Activated CD4-positive, alpha-beta T cell treated with anti-CD3 and anti-CD28 coated beads for 36 hours (primary cell): ENCODE measurements at regions of chr10 and their contacts with region 1.

Region 1: DNA sequence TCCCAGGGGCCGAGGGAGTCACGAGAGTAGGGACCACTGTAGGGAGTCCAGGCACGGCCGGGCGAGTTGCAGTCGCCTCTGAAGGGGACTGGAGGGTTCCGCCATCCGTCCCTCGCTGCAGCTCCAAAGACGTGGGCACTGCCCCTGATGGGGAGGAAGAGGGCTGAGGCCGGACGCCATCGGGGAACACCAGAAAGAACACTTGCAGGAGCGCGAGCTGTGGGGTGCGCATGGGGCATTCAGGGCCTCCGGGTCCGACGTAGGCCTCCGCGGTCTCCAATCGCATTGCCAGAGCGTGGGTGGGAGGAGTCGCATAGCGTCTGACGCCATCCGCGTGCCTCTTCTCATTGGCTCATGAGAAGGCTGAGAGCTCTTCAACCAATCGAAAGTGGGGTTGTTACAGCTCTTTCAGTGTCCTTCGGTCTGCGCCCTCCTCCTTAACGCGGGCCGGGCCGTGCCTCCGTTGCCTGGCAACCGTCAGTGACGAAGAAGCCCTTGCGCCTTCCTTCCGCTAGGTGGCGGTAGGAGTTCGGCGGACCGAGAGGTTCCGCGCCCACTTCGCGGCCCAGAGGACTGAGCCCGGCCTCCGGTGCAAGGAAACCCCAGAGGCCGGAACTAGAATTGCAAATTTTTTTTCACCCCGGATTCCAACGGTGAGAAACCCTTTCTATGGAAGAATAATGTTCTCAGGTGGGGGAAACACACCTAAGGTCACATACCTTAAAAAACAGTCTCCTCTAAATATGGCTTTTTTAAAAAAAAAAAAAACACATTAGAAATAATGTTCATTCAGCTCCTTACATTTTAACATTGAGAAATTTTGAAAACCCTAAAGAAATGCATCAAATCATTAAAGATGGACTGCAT is at the start of gene TCTN3:
- DNase-seq: peak; percentile 96
- ATAC-seq: peak; percentile 99
- H3K4me3 Mint-ChIP-seq: peak within 1 kb of the TSS; percentile 98
- H3K27ac Mint-ChIP-seq: peak within 1 kb of the TSS; percentile 92
- H3K4me1 Mint-ChIP-seq: peaks cover 37% of the 10 kb centered on the region
- H3K27me3 Mint-ChIP-seq: peaks cover 4% of the 10 kb centered on the region
- total RNA-seq, gene TCTN3: 19.4 to 20.0 TPM

Region 2: DNA sequence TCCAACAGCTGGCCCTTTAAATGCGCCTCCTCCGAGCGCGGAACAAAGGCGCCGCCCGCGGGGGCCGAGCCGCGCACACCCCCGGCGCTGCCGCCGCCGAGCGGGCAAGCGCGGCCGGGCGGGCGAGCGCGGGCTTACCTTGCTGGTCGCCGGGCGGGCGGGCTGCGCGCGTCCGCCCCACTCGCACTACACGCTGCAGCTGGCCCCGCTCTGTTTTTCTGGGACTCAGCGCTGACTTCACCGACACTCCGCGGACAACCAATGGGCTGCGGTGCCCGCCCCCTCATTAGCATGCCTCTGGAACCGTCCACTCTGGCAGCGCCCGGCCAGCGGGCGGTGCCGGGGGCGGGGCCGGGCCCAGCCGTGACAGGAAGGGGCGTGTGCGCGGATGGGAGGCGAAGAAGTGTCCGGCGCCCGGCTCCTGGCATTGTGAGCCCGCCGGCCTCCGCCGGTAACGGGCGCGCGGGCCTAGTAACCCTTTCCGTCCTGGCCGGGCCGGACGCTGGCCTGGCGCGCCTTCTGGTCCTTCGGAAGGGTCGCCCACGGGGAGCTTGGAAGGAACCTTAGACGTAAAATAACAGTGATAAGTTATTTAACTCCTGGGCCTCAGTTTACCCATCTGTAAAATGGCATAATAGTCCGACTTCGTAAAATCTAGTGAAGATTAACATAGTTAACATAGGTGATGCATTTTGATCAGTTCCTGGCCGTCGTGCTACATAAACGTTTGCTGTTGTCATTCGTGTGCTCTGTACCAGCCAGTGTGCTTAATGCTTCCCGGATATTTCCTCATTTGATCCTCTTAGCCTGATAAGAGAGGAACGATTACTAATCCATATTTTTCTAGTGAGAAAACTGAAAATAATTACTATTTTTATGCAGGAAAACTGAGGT is 132.5 kb before region 1 on chr10 and contains the start of gene SORBS1:
- CTCF ChIA-PET with region 1: no interaction called
- POLR2A ChIA-PET with region 1: no interaction called
- intact Hi-C with region 1: loop called in 1 of 2 experiments (anchors 1 kb)
- DNase-seq: peak; percentile 91
- ATAC-seq: peak; percentile 99
- H3K4me3 Mint-ChIP-seq: peak within 1 kb of the TSS; percentile 85
- H3K27ac Mint-ChIP-seq: no peak within 1 kb of the TSS
- H3K4me1 Mint-ChIP-seq: peaks cover 9% of the 10 kb centered on the region
- H3K27me3 Mint-ChIP-seq: peaks cover 6% of the 10 kb centered on the region
- total RNA-seq, gene SORBS1: 0.69 to 1.0 TPM

Region 3: GRCh38 chr10:95841661-95842498 is 148.0 kb after region 1 on chr10:
- CTCF ChIA-PET with region 1: interaction called, 107 read pairs
- POLR2A ChIA-PET with region 1: no interaction called
- intact Hi-C with region 1: loop called (anchors 1 kb)
- DNase-seq: peak; percentile 45
- ATAC-seq: peak; percentile 60
- H3K4me3 Mint-ChIP-seq: no peak overlapping the region
- H3K27ac Mint-ChIP-seq: no peak overlapping the region
- H3K4me1 Mint-ChIP-seq: no peaks in the 10 kb centered on the region
- H3K27me3 Mint-ChIP-seq: peaks cover 3% of the 10 kb centered on the region

Region 4: GRCh38 chr10:96043033-96043932 is 349.4 kb after region 1 on chr10 and contains the start of gene CCNJ:
- CTCF ChIA-PET with region 1: interaction called, 5 read pairs
- POLR2A ChIA-PET with region 1: no interaction called
- intact Hi-C with region 1: loop called (anchors 1 kb)
- DNase-seq: peak; percentile 90
- ATAC-seq: peak; percentile 93
- H3K4me3 Mint-ChIP-seq: peak within 1 kb of the TSS; percentile 93
- H3K27ac Mint-ChIP-seq: peak within 1 kb of the TSS; percentile 79
- H3K4me1 Mint-ChIP-seq: peaks cover 39% of the 10 kb centered on the region
- H3K27me3 Mint-ChIP-seq: no peaks in the 10 kb centered on the region
- total RNA-seq, gene CCNJ: 4.4 to 4.5 TPM

Region 5: GRCh38 chr10:96292971-96293920 is 599.3 kb after region 1 on chr10:
- CTCF ChIA-PET with region 1: no interaction called
- POLR2A ChIA-PET with region 1: no interaction called
- intact Hi-C with region 1: loop called in 1 of 2 experiments (anchors 10 kb)
- DNase-seq: peak; percentile 36
- ATAC-seq: peak; percentile 84
- H3K4me3 Mint-ChIP-seq: no peak overlapping the region
- H3K27ac Mint-ChIP-seq: no peak overlapping the region
- H3K4me1 Mint-ChIP-seq: peaks cover 26% of the 10 kb centered on the region
- H3K27me3 Mint-ChIP-seq: no peaks in the 10 kb centered on the region